GM12878 (cell line): ENCODE measurements at regions of chr15 and their contacts with region 1.

Region 1: GRCh38 chr15:42137431-42138261 is 18.8 kb downstream of the PLA2G4F start:
- DNase-seq: no peak
- ATAC-seq: peak; percentile 57
- H3K4me3 ChIP-seq: no peak overlapping the region
- H3K27ac ChIP-seq: no peak overlapping the region
- H3K4me1 ChIP-seq: no peaks in the 10 kb centered on the region
- H3K27me3 ChIP-seq: no peaks in the 10 kb centered on the region; a peak in 1 of 4 replicates
- CTCF ChIP-seq: peak; percentile 56 to 62 (median 59); a peak in 5 of 6 replicates
- EP300 ChIP-seq: no peak
- POLR2A ChIP-seq: no peak
- RAD21 ChIP-seq: peak; percentile 70

Region 2: DNA sequence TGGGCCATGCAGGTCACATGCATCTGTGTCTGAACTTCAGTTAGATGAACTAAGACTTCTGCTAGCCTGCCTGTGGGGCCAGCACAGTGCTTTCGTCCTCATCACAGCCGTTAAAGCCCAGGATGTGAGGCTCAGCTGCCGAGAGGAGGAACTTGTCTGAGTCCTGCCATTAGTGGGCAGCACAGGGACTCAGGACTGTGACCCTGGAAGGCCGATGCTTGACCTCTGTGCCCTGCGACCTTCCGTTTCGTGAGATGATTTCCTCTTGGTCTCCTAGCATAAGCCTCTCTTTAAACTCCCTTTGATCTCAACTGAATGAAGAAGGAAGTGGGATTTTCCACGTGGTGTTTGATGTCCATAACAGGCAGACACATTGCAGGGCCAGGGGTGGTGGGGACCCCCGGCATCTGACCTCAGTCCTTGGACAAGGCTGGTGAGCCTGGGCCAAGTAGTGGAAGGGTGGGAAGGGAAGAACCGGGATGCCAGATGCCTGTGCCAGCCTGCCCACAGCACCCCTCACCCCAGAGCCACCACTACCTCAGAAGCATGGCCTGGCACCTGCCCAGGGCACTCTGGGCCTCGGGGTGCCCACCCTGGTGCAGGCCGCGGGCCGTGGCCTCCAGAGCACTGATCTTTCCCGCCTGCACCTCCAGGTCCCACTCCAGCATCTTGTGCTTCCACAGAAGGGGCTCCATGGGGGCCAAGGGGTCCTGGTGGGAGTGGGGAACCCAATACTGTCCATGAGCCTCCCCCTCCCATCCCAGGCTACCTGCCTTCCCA is 277.4 kb before region 1 on chr15:
- CTCF ChIA-PET with region 1: no interaction called
- POLR2A ChIA-PET with region 1: no interaction called
- RAD21 ChIA-PET with region 1: no interaction called
- SMC1A ChIA-PET with region 1: no interaction called
- in situ Hi-C with region 1: no loop called
- intact Hi-C with region 1: no loop called
- DNase-seq: no peak
- ATAC-seq: peak; percentile 35
- H3K4me3 ChIP-seq: no peak overlapping the region
- H3K27ac ChIP-seq: no peak overlapping the region
- H3K4me1 ChIP-seq: no peaks in the 10 kb centered on the region
- H3K27me3 ChIP-seq: no peaks in the 10 kb centered on the region; a peak in 1 of 4 replicates
- CTCF ChIP-seq: 0 out of 6 replicates have a peak, but pooled peaks of 1 of the 3 experiments have one; percentile 1
- EP300 ChIP-seq: no peak
- POLR2A ChIP-seq: no peak
- RAD21 ChIP-seq: no peak

Region 3: GRCh38 chr15:41989259-41989933 is 148.2 kb before region 1 on chr15:
- CTCF ChIA-PET with region 1: interaction called, 16 read pairs
- POLR2A ChIA-PET with region 1: interaction called, 3 read pairs
- RAD21 ChIA-PET with region 1: interaction called, 3 read pairs
- SMC1A ChIA-PET with region 1: interaction called, 3 read pairs
- in situ Hi-C with region 1: no loop called
- intact Hi-C with region 1: loop called (anchors 2 kb)
- DNase-seq: no peak
- ATAC-seq: peak; percentile 99
- H3K4me3 ChIP-seq: no peak overlapping the region
- H3K27ac ChIP-seq: no peak overlapping the region
- H3K4me1 ChIP-seq: no peaks in the 10 kb centered on the region
- H3K27me3 ChIP-seq: no peaks in the 10 kb centered on the region; a peak in 1 of 4 replicates
- CTCF ChIP-seq: peak; percentile 99 to 100 (median 99); a peak in 5 of 6 replicates
- EP300 ChIP-seq: no peak
- POLR2A ChIP-seq: no peak
- RAD21 ChIP-seq: peak; percentile 100

Region 4: GRCh38 chr15:42065033-42065432 is 72.6 kb before region 1 on chr15:
- CTCF ChIA-PET with region 1: interaction called, 7 read pairs
- POLR2A ChIA-PET with region 1: no interaction called
- RAD21 ChIA-PET with region 1: no interaction called
- SMC1A ChIA-PET with region 1: no interaction called
- in situ Hi-C with region 1: no loop called
- intact Hi-C with region 1: loop called (anchors 1 kb)
- DNase-seq: no peak
- ATAC-seq: peak; percentile 47
- H3K4me3 ChIP-seq: no peak overlapping the region
- H3K27ac ChIP-seq: no peak overlapping the region
- H3K4me1 ChIP-seq: peaks cover 10% of the 10 kb centered on the region
- H3K27me3 ChIP-seq: no peaks in the 10 kb centered on the region
- CTCF ChIP-seq: no peak
- EP300 ChIP-seq: no peak
- POLR2A ChIP-seq: no peak
- RAD21 ChIP-seq: no peak

Region 5: DNA sequence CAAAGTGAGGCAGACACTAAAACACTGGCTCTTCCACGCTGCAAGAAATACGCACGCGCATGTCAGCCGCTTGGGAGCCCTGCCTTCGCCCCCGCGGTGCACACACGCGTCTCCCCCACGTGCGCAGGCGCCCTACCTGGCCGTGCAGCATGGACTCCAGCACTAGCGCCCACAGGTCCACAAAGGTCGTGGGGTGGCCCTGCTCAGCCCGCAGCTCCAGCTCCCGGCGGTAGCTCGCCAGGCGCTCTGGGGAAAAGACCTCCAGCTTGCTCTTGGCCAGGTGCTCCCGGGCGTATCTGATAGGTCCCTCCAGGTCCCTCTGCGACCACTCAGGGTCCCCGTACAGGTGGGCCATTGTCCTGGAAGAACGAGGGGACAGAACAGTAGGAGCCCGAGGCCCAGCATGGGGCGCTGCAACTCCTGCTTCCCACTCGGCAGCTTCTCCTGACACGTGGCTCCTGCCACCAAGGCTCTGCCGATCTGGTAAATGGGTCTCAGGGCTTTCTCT is 58.2 kb before region 1 on chr15:
- CTCF ChIA-PET with region 1: interaction called, 10 read pairs
- POLR2A ChIA-PET with region 1: no interaction called
- RAD21 ChIA-PET with region 1: interaction called, 4 read pairs
- SMC1A ChIA-PET with region 1: interaction called, 5 read pairs
- in situ Hi-C with region 1: no loop called
- intact Hi-C with region 1: loop called (anchors 5 kb)
- DNase-seq: no peak
- ATAC-seq: no peak
- H3K4me3 ChIP-seq: no peak overlapping the region
- H3K27ac ChIP-seq: no peak overlapping the region
- H3K4me1 ChIP-seq: no peaks in the 10 kb centered on the region
- H3K27me3 ChIP-seq: no peaks in the 10 kb centered on the region; a peak in 1 of 4 replicates
- CTCF ChIP-seq: no peak
- EP300 ChIP-seq: no peak
- POLR2A ChIP-seq: no peak
- RAD21 ChIP-seq: no peak

Region 6: GRCh38 chr15:42084460-42085235 is 53.0 kb before region 1 on chr15:
- CTCF ChIA-PET with region 1: interaction called, 6 read pairs
- POLR2A ChIA-PET with region 1: no interaction called
- RAD21 ChIA-PET with region 1: interaction called, 4 read pairs
- SMC1A ChIA-PET with region 1: interaction called, 5 read pairs
- in situ Hi-C with region 1: no loop called
- intact Hi-C with region 1: loop called (anchors 5 kb)
- DNase-seq: no peak
- ATAC-seq: peak; percentile 96
- H3K4me3 ChIP-seq: no peak overlapping the region
- H3K27ac ChIP-seq: no peak overlapping the region
- H3K4me1 ChIP-seq: no peaks in the 10 kb centered on the region
- H3K27me3 ChIP-seq: no peaks in the 10 kb centered on the region; a peak in 1 of 4 replicates
- CTCF ChIP-seq: peak; percentile 89 to 94 (median 91)
- EP300 ChIP-seq: no peak
- POLR2A ChIP-seq: no peak
- RAD21 ChIP-seq: peak; percentile 72

Region 7: DNA sequence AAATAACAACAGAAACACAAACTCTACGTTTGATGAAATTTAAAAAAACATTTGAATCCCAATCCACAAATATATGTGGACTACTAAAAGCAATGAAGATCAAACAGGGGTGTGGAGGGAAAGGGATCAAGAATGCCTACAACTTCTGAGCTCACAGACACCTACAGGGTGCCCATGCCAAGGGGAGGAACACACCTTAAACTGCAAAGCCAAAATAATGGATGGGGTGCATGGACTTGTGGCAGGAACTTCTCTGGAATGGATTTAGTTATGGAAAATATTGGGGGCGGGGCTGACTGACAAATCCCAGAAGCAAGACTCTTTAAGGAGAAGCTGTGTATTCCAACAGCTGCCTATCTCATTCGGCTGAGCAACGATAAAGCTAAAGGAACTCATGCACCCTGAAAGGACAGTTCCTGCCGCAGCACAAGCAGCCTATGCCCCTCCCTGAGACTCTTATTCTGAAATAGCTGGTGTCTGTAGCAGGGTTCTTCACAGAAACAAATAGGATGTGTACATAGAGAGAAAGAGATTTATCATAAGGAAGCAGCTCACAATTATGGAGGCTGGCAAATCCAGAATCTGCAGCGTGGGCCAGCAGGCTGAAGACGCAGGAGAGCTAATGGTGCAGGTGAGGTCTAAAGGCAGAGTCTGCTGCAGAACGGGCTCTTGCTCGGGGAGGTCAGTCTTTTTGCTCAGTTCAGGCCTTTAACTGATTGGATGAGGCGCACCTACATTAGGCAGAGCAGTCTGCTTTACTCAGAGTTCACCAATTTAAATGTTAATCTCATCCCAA is 18.8 kb before region 1 on chr15:
- CTCF ChIA-PET with region 1: interaction called, 13 read pairs
- POLR2A ChIA-PET with region 1: no interaction called
- RAD21 ChIA-PET with region 1: no interaction called
- SMC1A ChIA-PET with region 1: interaction called, 4 read pairs
- in situ Hi-C with region 1: no loop called
- intact Hi-C with region 1: no loop called
- DNase-seq: no peak
- ATAC-seq: no peak
- H3K4me3 ChIP-seq: no peak overlapping the region
- H3K27ac ChIP-seq: no peak overlapping the region
- H3K4me1 ChIP-seq: no peaks in the 10 kb centered on the region
- H3K27me3 ChIP-seq: no peaks in the 10 kb centered on the region; a peak in 1 of 4 replicates
- CTCF ChIP-seq: no peak
- EP300 ChIP-seq: no peak
- POLR2A ChIP-seq: no peak
- RAD21 ChIP-seq: no peak

Region 8: DNA sequence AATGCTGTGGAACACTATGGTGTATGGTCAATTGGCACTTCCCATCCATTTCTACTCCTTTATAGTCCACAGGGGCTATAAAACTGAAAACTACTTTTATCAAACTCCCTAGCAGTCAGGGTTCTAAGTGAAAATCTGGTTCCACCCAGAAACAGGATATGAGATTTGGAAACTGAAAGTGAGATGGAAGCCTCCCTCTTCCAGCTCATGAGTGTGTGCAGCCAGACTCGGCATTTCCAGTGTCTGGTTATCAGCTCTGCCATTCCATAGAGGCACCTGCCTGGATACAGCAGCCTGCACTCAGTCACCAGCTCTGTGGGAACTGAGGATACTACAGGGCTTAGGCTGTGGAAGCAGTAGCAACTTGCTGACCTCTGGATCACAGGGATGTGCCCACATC is 33.5 kb after region 1 on chr15:
- CTCF ChIA-PET with region 1: no interaction called
- POLR2A ChIA-PET with region 1: no interaction called
- RAD21 ChIA-PET with region 1: no interaction called
- SMC1A ChIA-PET with region 1: no interaction called
- in situ Hi-C with region 1: no loop called
- intact Hi-C with region 1: no loop called
- DNase-seq: no peak
- ATAC-seq: no peak
- H3K4me3 ChIP-seq: no peak overlapping the region
- H3K27ac ChIP-seq: no peak overlapping the region
- H3K4me1 ChIP-seq: 0 out of 2 replicates have a peak, but pooled peaks cover 3% of the 10 kb centered on the region
- H3K27me3 ChIP-seq: no peaks in the 10 kb centered on the region
- CTCF ChIP-seq: no peak
- EP300 ChIP-seq: no peak
- POLR2A ChIP-seq: no peak
- RAD21 ChIP-seq: no peak

Region 9: GRCh38 chr15:42385206-42385979 is 247.7 kb after region 1 on chr15:
- CTCF ChIA-PET with region 1: interaction called, 13 read pairs
- POLR2A ChIA-PET with region 1: no interaction called
- RAD21 ChIA-PET with region 1: interaction called, 4 read pairs
- SMC1A ChIA-PET with region 1: interaction called, 3 read pairs
- in situ Hi-C with region 1: no loop called
- intact Hi-C with region 1: no loop called
- DNase-seq: no peak
- ATAC-seq: peak; percentile 93
- H3K4me3 ChIP-seq: no peak overlapping the region
- H3K27ac ChIP-seq: no peak overlapping the region
- H3K4me1 ChIP-seq: no peaks in the 10 kb centered on the region
- H3K27me3 ChIP-seq: no peaks in the 10 kb centered on the region
- CTCF ChIP-seq: peak; percentile 67 to 80 (median 74)
- EP300 ChIP-seq: no peak
- POLR2A ChIP-seq: no peak
- RAD21 ChIP-seq: peak; percentile 71